Right ventricle myocardium inferior (tissue), 1 donor: ENCODE measurements at regions of chrX and their contacts with region 1.

Region 1: GRCh38 chrX:74343343-74344279 is 39.6 kb downstream of the ZCCHC13 start:
- DNase-seq: no peak
- ATAC-seq: peak; percentile 73

Region 2: GRCh38 chrX:74133156-74133796 is 210.3 kb before region 1 on chrX:
- intact Hi-C with region 1: loop called (anchors 5 kb)
- DNase-seq: no peak
- ATAC-seq: peak; percentile 59